ENCODE measurements at regions of chr2 and their contacts with region 1.

Region 1: GRCh38 chr2:27992787-27993401 is 102.4 kb downstream of the BABAM2 start:
- DNase-seq: peak; percentile 77
- H3K4me3 Mint-ChIP-seq: no peak overlapping the region
- H3K27ac Mint-ChIP-seq: no peak overlapping the region
- H3K4me1 Mint-ChIP-seq: peaks cover 43% of the 10 kb centered on the region
- H3K27me3 Mint-ChIP-seq: no peaks in the 10 kb centered on the region
- CTCF ChIP-seq: no peak

Region 2: GRCh38 chr2:28004086-28004485 is 11.2 kb after region 1 on chr2:
- CTCF ChIA-PET with region 1: no interaction called
- POLR2A ChIA-PET with region 1: interaction called, 19 read pairs
- intact Hi-C with region 1: no loop called
- DNase-seq: peak; percentile 73
- H3K4me3 Mint-ChIP-seq: no peak overlapping the region
- H3K27ac Mint-ChIP-seq: peak overlapping the region; percentile 69
- H3K4me1 Mint-ChIP-seq: peaks cover 13% of the 10 kb centered on the region
- H3K27me3 Mint-ChIP-seq: no peaks in the 10 kb centered on the region
- CTCF ChIP-seq: no peak

Region 3: DNA sequence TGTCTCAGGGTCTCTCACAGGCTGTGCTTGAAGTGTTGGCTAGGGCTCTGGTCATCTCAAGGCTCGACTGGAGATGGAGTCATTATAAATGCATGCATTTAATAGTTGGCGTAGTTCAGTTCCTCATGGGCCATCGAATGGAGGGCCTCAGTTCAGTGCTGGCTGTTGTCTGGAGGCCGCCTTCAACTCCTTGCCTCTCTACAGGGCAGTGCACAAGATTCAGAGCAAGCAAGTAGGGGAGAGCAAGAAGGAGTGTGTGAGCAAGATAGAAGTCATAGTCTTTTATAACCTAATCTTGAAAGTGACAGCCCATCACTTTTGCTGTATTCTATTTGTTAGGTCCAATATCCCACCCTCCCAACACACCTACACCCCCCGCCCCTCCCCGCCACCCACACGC is 35.1 kb after region 1 on chr2:
- CTCF ChIA-PET with region 1: no interaction called
- POLR2A ChIA-PET with region 1: no interaction called
- intact Hi-C with region 1: no loop called
- DNase-seq: no peak
- H3K4me3 Mint-ChIP-seq: no peak overlapping the region
- H3K27ac Mint-ChIP-seq: no peak overlapping the region
- H3K4me1 Mint-ChIP-seq: peaks cover 5% of the 10 kb centered on the region
- H3K27me3 Mint-ChIP-seq: no peaks in the 10 kb centered on the region
- CTCF ChIP-seq: no peak

Measured in MCF 10A (cell line).